Ovary (tissue), 10 donors: ENCODE measurements at regions of chr5 and their contacts with region 1.

Region 1: DNA sequence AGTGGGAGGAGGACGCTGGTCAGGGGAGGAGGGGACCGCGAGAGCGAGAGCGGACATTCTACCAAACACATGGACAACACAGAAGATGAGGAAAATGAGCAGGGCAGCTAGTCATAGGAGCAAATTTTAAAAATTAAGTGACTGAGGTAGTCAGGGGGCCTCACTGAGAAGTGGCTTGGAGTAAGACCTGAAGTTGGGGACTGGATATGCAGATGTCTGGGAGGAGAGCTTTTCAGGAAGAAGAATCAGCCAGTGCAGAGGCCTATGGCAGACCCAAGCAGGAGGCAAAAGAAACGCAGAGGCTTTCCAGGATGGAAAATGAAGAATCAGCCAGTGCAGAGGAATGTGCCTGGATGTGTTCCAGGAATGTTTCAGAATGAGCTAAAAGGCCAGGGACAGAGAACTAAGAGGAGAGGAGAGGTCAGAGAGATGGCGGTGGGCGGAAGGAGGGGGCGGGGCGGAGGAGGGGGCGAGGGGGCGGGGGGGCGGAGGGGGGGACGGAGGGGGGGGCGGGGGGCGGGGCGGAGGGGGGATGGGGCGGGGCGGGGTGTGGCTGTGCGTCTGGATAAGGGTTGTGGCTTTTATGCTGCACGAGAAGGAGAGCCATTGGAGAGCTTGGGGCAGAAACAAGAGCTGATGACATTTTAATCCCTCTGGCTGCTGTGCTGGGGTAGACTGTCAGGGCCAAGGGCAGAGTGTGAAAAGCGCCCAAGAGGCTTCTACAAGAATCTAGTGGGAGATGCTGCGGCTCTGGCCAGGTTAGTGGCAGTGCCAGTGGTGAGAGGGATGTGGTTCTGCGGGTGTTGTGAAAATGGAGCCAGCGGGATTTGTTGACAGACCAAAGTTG is 129.6 kb downstream of the KCNIP1 start:
- DNase-seq: peak; percentile 60 to 79 (median 73)
- H3K4me3 ChIP-seq: peak overlapping the region; percentile 2
- H3K27ac ChIP-seq: peak overlapping the region; percentile 57 to 86
- H3K4me1 ChIP-seq: peaks cover 10% of the 10 kb centered on the region
- H3K27me3 ChIP-seq: no peaks in the 10 kb centered on the region
- CTCF ChIP-seq: no peak
- EP300 ChIP-seq: no peak
- POLR2A ChIP-seq: no peak

Region 2: DNA sequence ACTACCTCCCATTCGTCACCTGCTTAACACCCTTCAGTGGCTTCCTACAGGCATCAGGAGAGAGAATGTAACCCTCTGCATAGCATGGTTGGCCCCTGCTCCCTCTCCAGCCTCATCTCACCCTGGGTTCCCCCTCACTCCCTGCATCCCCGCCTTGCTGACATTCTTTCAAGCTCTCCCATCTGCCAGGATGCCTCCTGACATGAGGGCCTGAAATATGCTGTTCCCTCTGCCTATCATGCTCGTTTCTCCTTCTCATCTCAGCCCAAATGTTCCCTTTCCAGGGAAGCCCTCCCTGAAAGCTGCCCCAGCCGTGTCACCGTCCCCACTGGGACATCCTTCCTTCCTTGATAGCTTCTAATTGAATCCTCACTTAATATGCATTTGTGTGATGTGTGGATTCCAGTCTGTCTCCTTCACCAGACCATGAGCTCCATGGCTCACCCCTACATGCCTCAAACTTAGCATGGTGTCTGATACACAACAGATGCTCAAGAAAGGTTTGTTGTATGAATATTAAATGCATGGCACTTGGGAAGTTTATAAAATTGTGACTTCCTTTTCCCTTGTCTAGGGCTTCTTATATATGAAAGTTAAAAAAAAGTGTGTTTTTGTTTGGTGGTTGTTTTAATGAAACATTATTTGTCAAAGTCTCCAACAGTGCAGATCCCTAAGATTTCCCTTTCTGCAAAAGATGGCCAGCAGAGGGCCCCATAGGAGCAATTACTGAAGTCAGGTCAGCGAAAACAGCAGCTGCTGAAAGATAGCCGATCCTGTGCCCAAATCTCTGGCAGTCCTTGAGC is 407.9 kb before region 1 on chr5:
- intact Hi-C with region 1: loop called in 2 of 4 experiments (anchors 5 kb)
- DNase-seq: peak; percentile 72 to 85 (median 76)
- H3K4me3 ChIP-seq: no peak overlapping the region
- H3K27ac ChIP-seq: no peak overlapping the region
- H3K4me1 ChIP-seq: peaks cover 7% of the 10 kb centered on the region
- H3K27me3 ChIP-seq: no peaks in the 10 kb centered on the region
- CTCF ChIP-seq: peak; percentile 36 to 81 (median 76)
- EP300 ChIP-seq: no peak
- POLR2A ChIP-seq: no peak

Region 3: GRCh38 chr5:170434966-170435605 is 198.4 kb before region 1 on chr5:
- intact Hi-C with region 1: loop called in 3 of 4 experiments (anchors 5 kb)
- DNase-seq: peak; percentile 41 to 83 (median 59)
- H3K4me3 ChIP-seq: no peak overlapping the region
- H3K27ac ChIP-seq: no peak overlapping the region
- H3K4me1 ChIP-seq: no peaks in the 10 kb centered on the region
- H3K27me3 ChIP-seq: no peaks in the 10 kb centered on the region
- CTCF ChIP-seq: peak; percentile 43 to 80 (median 75)
- EP300 ChIP-seq: no peak
- POLR2A ChIP-seq: no peak

Region 4: DNA sequence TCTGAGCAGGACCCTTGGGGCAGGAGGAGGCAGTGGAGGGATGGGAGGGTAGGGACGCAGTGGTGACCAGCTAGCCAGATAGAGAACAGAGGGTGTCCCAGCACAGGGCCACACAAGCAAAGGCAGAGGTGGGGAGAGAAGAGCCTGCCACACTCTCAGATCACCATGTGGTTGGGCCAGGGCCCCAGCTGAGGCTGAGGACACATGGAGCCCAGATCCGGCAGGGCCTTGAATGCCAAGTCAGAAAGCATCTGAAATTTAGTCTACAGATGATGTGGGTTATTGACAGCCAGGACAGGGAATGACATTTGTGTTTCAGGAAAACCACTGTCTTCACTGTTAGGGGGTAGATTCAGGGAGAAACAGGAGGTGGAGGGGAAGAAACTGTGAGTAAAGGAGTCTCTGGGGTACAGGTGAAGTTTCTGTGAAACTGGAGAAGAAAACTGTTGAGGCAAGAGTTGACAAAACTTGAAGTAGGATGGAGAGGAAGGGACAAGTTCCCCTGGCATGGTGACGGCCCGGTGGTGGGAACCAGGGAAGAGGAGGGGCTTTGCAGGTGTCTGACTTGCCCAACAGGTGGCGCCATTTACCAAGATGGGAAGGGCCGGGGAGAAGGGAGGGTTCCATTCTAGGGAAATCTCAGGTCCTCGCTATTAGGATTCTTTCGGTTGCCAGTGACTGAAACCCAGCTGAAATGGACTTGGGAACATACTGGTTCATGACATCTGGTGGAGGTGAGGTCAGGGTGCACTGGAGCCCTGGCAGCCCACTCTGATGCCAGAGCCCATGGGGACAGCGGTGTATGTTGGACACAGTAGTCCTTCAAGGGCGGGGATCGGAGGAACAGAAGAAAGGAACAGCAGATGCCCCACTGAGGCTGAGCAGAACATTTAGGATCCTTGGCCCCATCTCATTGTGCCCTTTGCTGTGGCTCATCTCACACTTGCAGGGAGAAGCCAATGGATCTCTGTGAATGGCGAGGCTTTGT is 29.6 kb before region 1 on chr5:
- intact Hi-C with region 1: loop called in 1 of 4 experiments (anchors 2 kb)
- DNase-seq: peak; percentile 47 to 68 (median 59)
- H3K4me3 ChIP-seq: no peak overlapping the region
- H3K27ac ChIP-seq: no peak overlapping the region
- H3K4me1 ChIP-seq: no peaks in the 10 kb centered on the region
- H3K27me3 ChIP-seq: no peaks in the 10 kb centered on the region
- CTCF ChIP-seq: peak in 2 of 3 donors; percentile 8 to 40
- EP300 ChIP-seq: no peak
- POLR2A ChIP-seq: no peak